ENCODE measurements at regions of chr12 and their contacts with region 1.

Region 1: GRCh38 chr12:113261847-113262470 is 40.7 kb downstream of the TPCN1 start:
- DNase-seq: no peak

Region 2: GRCh38 chr12:113221181-113221997 is 40.6 kb before region 1 on chr12 and contains the start of gene TPCN1:
- intact Hi-C with region 1: loop called (anchors 5 kb)
- DNase-seq: peak; percentile 99
- total RNA-seq, gene TPCN1: 77.1 TPM